ENCODE measurements at regions of chr7 and their contacts with region 1.

Region 1: DNA sequence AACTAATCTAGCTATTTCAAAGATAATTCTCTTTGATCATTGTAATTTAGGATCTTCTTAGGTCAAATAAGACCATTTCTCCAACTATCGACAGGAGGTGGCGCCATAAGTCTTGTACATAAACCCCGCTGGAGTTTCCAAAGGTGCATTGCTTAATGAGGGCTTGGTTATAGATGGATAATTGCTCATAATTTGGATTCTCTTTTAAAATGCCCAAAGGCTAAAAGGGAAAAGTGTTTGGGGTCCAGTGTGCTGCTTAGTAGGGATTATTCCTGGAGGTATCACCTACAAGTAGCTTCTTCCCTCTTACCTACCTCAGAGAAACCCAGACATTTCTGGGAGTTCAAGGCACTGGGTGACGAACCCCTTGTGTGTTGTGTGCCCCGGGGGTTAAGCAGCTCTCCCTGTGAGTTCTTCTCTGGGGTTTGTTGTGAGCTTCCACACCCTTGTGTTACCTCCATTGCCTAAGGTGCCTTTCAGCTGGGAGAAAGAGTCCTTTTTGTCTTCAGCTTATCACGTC is 75.2 kb downstream of the PAXIP1 start:
- DNase-seq: peak; percentile 49
- CTCF ChIP-seq: peak; percentile 72

Region 2: DNA sequence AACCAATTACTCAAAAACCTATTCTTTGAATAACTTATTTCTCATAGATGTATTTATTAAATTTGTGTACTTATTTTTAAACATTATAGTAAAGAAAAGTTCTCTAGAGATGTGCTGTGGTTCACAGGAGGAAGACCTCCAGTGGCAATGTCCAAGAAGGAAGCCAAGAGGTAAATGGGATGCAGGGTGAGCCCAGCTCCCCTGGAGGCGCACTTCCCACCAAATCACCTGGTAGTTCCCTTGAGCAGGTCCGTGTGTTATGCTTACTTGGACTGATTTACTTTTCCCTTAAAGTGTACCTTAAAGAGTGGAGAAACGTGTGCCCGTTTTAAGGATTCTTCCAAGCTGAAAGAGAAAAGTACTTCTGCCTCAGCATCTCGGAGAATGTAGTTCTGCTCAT is 19.9 kb after region 1 on chr7:
- CTCF ChIA-PET with region 1: interaction called, 42 read pairs
- POLR2A ChIA-PET with region 1: no interaction called
- DNase-seq: no peak
- CTCF ChIP-seq: no peak

Region 3: GRCh38 chr7:154978017-154978416 is 50.3 kb after region 1 on chr7:
- CTCF ChIA-PET with region 1: interaction called, 12 read pairs
- POLR2A ChIA-PET with region 1: no interaction called
- DNase-seq: no peak
- CTCF ChIP-seq: no peak

Region 4: GRCh38 chr7:155009570-155010157 is 82.0 kb after region 1 on chr7:
- CTCF ChIA-PET with region 1: interaction called, 34 read pairs
- POLR2A ChIA-PET with region 1: no interaction called
- DNase-seq: no peak
- CTCF ChIP-seq: peak; percentile 49

Region 5: DNA sequence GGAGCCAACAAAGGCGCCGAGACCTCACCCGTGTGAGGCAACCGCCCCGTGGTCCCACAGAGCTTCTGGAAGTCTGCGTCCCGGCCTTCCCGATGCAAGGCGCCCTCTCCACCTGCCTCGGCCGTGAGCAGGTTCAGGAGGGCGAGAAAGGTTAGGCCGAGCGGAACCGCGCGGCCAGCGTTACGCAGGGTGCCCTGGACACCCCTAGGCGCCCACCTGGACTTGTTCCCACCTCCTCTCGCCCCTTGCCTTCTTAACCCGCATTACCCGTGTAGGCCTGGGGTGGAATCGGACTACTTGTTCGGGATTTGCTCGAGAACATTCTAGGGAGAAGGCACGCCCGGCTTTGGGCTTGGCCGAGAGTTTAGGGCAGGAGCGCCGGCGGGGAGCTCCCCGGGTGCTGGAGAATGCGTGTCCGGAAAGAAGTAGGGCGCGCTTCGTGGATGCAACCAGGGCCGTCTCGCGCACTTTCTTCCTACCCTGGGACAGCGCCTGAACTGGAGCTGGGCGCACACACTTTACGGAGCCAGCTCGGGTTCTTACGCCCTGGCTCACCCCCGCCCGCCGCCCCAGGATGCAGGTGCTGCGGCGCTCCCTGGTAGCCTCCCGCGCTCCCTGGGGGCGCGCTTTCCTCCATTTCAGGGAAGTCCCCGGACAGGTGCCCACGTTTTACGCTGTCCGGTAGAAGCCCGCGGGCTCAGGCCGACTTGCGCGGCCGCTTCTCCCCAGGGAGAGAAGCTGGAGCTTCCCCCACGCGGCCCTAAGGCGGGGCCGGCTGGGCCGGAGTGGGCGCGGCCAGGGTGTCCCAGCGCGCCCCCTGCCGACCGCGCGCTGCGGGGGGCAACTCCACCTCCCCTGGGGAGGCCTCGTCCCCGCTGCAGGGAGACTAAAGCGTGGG is 444.4 kb after region 1 on chr7:
- CTCF ChIA-PET with region 1: interaction called, 15 read pairs
- POLR2A ChIA-PET with region 1: no interaction called
- DNase-seq: peak; percentile 69
- CTCF ChIP-seq: peak; percentile 67